ENCODE measurements at regions of chr10 and their contacts with region 1.

Region 1: GRCh38 chr10:987870-988666 is at the start of gene GTPBP4:
- DNase-seq: peak; percentile 98
- total RNA-seq, gene GTPBP4: 79.6 and 88.8 TPM in 2 replicates

Region 2: DNA sequence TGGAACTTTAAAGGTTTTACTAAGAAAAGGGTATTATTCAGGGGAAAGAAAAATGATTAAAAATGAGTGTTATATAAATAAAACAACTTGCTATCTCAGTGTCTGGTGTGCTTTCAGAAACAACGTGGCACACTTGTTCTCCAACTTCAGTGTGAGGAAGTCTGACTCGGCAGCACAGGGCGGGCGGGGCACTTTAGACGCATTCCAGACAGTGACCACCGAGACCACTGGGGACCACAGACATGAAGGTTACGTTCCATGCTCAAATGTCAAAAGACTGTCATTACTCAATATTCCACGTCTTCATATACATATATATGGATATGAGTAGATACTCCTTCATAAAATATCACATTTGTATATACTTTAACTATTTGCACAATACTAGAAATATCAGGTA is 143.5 kb before region 1 on chr10:
- in situ Hi-C with region 1: loop called (anchors 10 kb)
- DNase-seq: no peak

Region 3: GRCh38 chr10:1142596-1142995 is 154.5 kb after region 1 on chr10:
- in situ Hi-C with region 1: no loop called
- DNase-seq: no peak

Measured in G401 (cell line).